Heart right ventricle (tissue), 16 donors: ENCODE measurements at regions of chr10 and their contacts with region 1.

Region 1: GRCh38 chr10:22615819-22616499 is 98.4 kb downstream of the PIP4K2A start:
- DNase-seq: peak in 1 of 2 donors; percentile 38
- ATAC-seq: peak; percentile 25 to 60 (median 48)
- H3K4me3 ChIP-seq: peak overlapping the region in 1 of 10 donors; percentile 32
- H3K27ac ChIP-seq: peak overlapping the region in 8 of 10 donors; percentile 17 to 83 (median 59)
- H3K4me1 ChIP-seq: peaks cover 7 to 93% (median 54%) of the 10 kb centered on the region in 9 donors
- H3K27me3 ChIP-seq: no peaks in the 10 kb centered on the region
- CTCF ChIP-seq: no peak

Region 2: GRCh38 chr10:22655311-22655981 is 39.5 kb after region 1 on chr10:
- intact Hi-C with region 1: loop called in 1 of 10 experiments (anchors 5 kb)
- DNase-seq: no peak
- ATAC-seq: no peak
- H3K4me3 ChIP-seq: no peak overlapping the region
- H3K27ac ChIP-seq: peak overlapping the region in 1 of 10 donors; percentile 63
- H3K4me1 ChIP-seq: peaks cover 3 to 99% (median 27%) of the 10 kb centered on the region in 9 donors
- H3K27me3 ChIP-seq: no peaks in the 10 kb centered on the region
- CTCF ChIP-seq: no peak

Region 3: GRCh38 chr10:22849077-22849805 is 233.3 kb after region 1 on chr10:
- intact Hi-C with region 1: loop called in 1 of 10 experiments (anchors 5 kb)
- DNase-seq: peak; percentile 65 to 84
- ATAC-seq: peak; percentile 90 to 99 (median 97)
- H3K4me3 ChIP-seq: peak overlapping the region in 7 of 10 donors; percentile 6 to 34 (median 20)
- H3K27ac ChIP-seq: peak overlapping the region; percentile 52 to 85 (median 75)
- H3K4me1 ChIP-seq: peaks cover 6 to 27% (median 20%) of the 10 kb centered on the region in 9 donors
- H3K27me3 ChIP-seq: no peaks in the 10 kb centered on the region
- CTCF ChIP-seq: no peak